ENCODE measurements at regions of chr1 and their contacts with region 1.

Region 1: GRCh38 chr1:89022167-89022959 is at the start of gene GBP3:
- DNase-seq: peak in 4 of 35 experiments; percentile 1 to 64 (median 10)
- ATAC-seq: peak; percentile 70 to 82 (median 77)
- H3K4me3 ChIP-seq: peak within 1 kb of the TSS; percentile 57 to 77
- H3K4me3 Mint-ChIP-seq: peak within 1 kb of the TSS; percentile 80 to 96 (median 92)
- H3K27ac ChIP-seq: peak within 1 kb of the TSS; percentile 88
- H3K27ac Mint-ChIP-seq: peak within 1 kb of the TSS; percentile 95 to 97
- H3K4me1 ChIP-seq: peaks cover 14 to 26% of the 10 kb centered on the region in 2 experiments
- H3K4me1 Mint-ChIP-seq: peaks cover 43 to 58% (median 54%) of the 10 kb centered on the region in 3 donors
- H3K27me3 ChIP-seq: no peaks in the 10 kb centered on the region
- H3K27me3 Mint-ChIP-seq: no peaks in the 10 kb centered on the region
- total RNA-seq, gene GBP3: 26.7 to 52.0 (median 39.2) TPM

Region 2: GRCh38 chr1:88847643-88848042 is 174.7 kb before region 1 on chr1:
- CTCF ChIA-PET with region 1: no interaction called
- POLR2A ChIA-PET with region 1: no interaction called
- DNase-seq: no peak
- ATAC-seq: no peak
- H3K4me3 ChIP-seq: no peak overlapping the region
- H3K4me3 Mint-ChIP-seq: no peak overlapping the region
- H3K27ac ChIP-seq: no peak overlapping the region
- H3K27ac Mint-ChIP-seq: no peak overlapping the region
- H3K4me1 ChIP-seq: no peaks in the 10 kb centered on the region
- H3K4me1 Mint-ChIP-seq: no peaks in the 10 kb centered on the region
- H3K27me3 ChIP-seq: no peaks in the 10 kb centered on the region
- H3K27me3 Mint-ChIP-seq: no peaks in the 10 kb centered on the region

Region 3: GRCh38 chr1:88998716-88999115 is 23.6 kb before region 1 on chr1:
- CTCF ChIA-PET with region 1: interaction called, 3 to 11 read pairs
- POLR2A ChIA-PET with region 1: interaction called in 1 of 2 experiments, 12 read pairs
- DNase-seq: peak in 3 of 35 experiments; percentile 26 to 86 (median 36)
- ATAC-seq: peak; percentile 75 to 87 (median 81)
- H3K4me3 ChIP-seq: no peak overlapping the region
- H3K4me3 Mint-ChIP-seq: no peak overlapping the region
- H3K27ac ChIP-seq: no peak overlapping the region
- H3K27ac Mint-ChIP-seq: no peak overlapping the region
- H3K4me1 ChIP-seq: peaks cover under 1 to 19% of the 10 kb centered on the region in 2 experiments
- H3K4me1 Mint-ChIP-seq: peaks cover 34 to 39% (median 38%) of the 10 kb centered on the region in 3 donors
- H3K27me3 ChIP-seq: no peaks in the 10 kb centered on the region
- H3K27me3 Mint-ChIP-seq: no peaks in the 10 kb centered on the region

Region 4: GRCh38 chr1:89005286-89006151 is 16.8 kb before region 1 on chr1:
- CTCF ChIA-PET with region 1: interaction called in 1 of 2 experiments, 3 read pairs
- POLR2A ChIA-PET with region 1: interaction called in 1 of 2 experiments, 14 read pairs
- DNase-seq: no peak
- ATAC-seq: no peak
- H3K4me3 ChIP-seq: no peak overlapping the region
- H3K4me3 Mint-ChIP-seq: no peak overlapping the region
- H3K27ac ChIP-seq: no peak overlapping the region
- H3K27ac Mint-ChIP-seq: peak overlapping the region in 1 of 2 donors; percentile 21
- H3K4me1 ChIP-seq: peaks cover 0 to 17% of the 10 kb centered on the region in 2 experiments
- H3K4me1 Mint-ChIP-seq: peaks cover 45 to 51% (median 45%) of the 10 kb centered on the region in 3 donors
- H3K27me3 ChIP-seq: no peaks in the 10 kb centered on the region
- H3K27me3 Mint-ChIP-seq: no peaks in the 10 kb centered on the region

Region 5: GRCh38 chr1:89041119-89041641 is 18.8 kb after region 1 on chr1:
- CTCF ChIA-PET with region 1: no interaction called
- POLR2A ChIA-PET with region 1: no interaction called
- DNase-seq: no peak
- ATAC-seq: peak in 2 of 4 experiments; percentile 51 to 55
- H3K4me3 ChIP-seq: no peak overlapping the region
- H3K4me3 Mint-ChIP-seq: no peak overlapping the region
- H3K27ac ChIP-seq: no peak overlapping the region
- H3K27ac Mint-ChIP-seq: peak overlapping the region; percentile 2 to 37
- H3K4me1 ChIP-seq: no peaks in the 10 kb centered on the region
- H3K4me1 Mint-ChIP-seq: peaks cover 26 to 37% (median 34%) of the 10 kb centered on the region in 3 donors
- H3K27me3 ChIP-seq: no peaks in the 10 kb centered on the region
- H3K27me3 Mint-ChIP-seq: no peaks in the 10 kb centered on the region

Region 6: GRCh38 chr1:89125913-89126580 is 103.7 kb after region 1 on chr1 and contains the start of gene GBP2:
- CTCF ChIA-PET with region 1: interaction called in 1 of 2 experiments, 7 read pairs
- POLR2A ChIA-PET with region 1: interaction called in 1 of 2 experiments, 10 read pairs
- DNase-seq: peak in 7 of 35 experiments; percentile 4 to 63 (median 24)
- ATAC-seq: peak; percentile 78 to 86 (median 83)
- H3K4me3 ChIP-seq: peak within 1 kb of the TSS; percentile 77 to 94
- H3K4me3 Mint-ChIP-seq: peak within 1 kb of the TSS; percentile 92 to 100 (median 94)
- H3K27ac ChIP-seq: peak within 1 kb of the TSS; percentile 74
- H3K27ac Mint-ChIP-seq: peak within 1 kb of the TSS; percentile 98 to 100
- H3K4me1 ChIP-seq: peaks cover 33 to 38% of the 10 kb centered on the region in 2 experiments
- H3K4me1 Mint-ChIP-seq: peaks cover 57 to 66% (median 65%) of the 10 kb centered on the region in 3 donors
- H3K27me3 ChIP-seq: no peaks in the 10 kb centered on the region
- H3K27me3 Mint-ChIP-seq: no peaks in the 10 kb centered on the region
- total RNA-seq, gene GBP2: 82.2 to 226 (median 186) TPM

Region 7: GRCh38 chr1:89274411-89274857 is 252.1 kb after region 1 on chr1:
- CTCF ChIA-PET with region 1: interaction called in 1 of 2 experiments, 4 read pairs
- POLR2A ChIA-PET with region 1: interaction called in 1 of 2 experiments, 10 read pairs
- DNase-seq: peak in 3 of 35 experiments; percentile 9 to 74 (median 30)
- ATAC-seq: peak in 3 of 4 experiments; percentile 23 to 56 (median 24)
- H3K4me3 ChIP-seq: peak overlapping the region in 1 of 2 donors; percentile 28
- H3K4me3 Mint-ChIP-seq: peak overlapping the region; percentile 71 to 82 (median 76)
- H3K27ac ChIP-seq: peak overlapping the region; percentile 87
- H3K27ac Mint-ChIP-seq: peak overlapping the region; percentile 92 to 99
- H3K4me1 ChIP-seq: peaks cover 37 to 51% of the 10 kb centered on the region in 2 experiments
- H3K4me1 Mint-ChIP-seq: peaks cover 62 to 90% (median 79%) of the 10 kb centered on the region in 3 donors
- H3K27me3 ChIP-seq: no peaks in the 10 kb centered on the region
- H3K27me3 Mint-ChIP-seq: no peaks in the 10 kb centered on the region

Region 8: GRCh38 chr1:89358287-89358893 is 336.0 kb after region 1 on chr1:
- CTCF ChIA-PET with region 1: interaction called, 3 to 11 read pairs
- POLR2A ChIA-PET with region 1: no interaction called
- DNase-seq: peak; percentile 58 to 88 (median 79)
- ATAC-seq: peak; percentile 91 to 97 (median 95)
- H3K4me3 ChIP-seq: no peak overlapping the region
- H3K4me3 Mint-ChIP-seq: peak overlapping the region in 2 of 3 donors; percentile 0 to 60
- H3K27ac ChIP-seq: no peak overlapping the region
- H3K27ac Mint-ChIP-seq: peak overlapping the region; percentile 65 to 84
- H3K4me1 ChIP-seq: peaks cover 0 to 5% of the 10 kb centered on the region in 2 experiments
- H3K4me1 Mint-ChIP-seq: peaks cover 36 to 47% (median 37%) of the 10 kb centered on the region in 3 donors
- H3K27me3 ChIP-seq: no peaks in the 10 kb centered on the region
- H3K27me3 Mint-ChIP-seq: no peaks in the 10 kb centered on the region

Region 9: GRCh38 chr1:89454845-89455521 is 432.6 kb after region 1 on chr1:
- CTCF ChIA-PET with region 1: interaction called in 1 of 2 experiments, 4 read pairs
- POLR2A ChIA-PET with region 1: interaction called in 1 of 2 experiments, 11 read pairs
- DNase-seq: peak; percentile 8 to 79 (median 49)
- ATAC-seq: peak; percentile 75 to 91 (median 79)
- H3K4me3 ChIP-seq: no peak overlapping the region
- H3K4me3 Mint-ChIP-seq: no peak overlapping the region
- H3K27ac ChIP-seq: no peak overlapping the region
- H3K27ac Mint-ChIP-seq: no peak overlapping the region
- H3K4me1 ChIP-seq: peaks cover 0 to 2% of the 10 kb centered on the region in 2 experiments
- H3K4me1 Mint-ChIP-seq: peaks cover 9 to 12% (median 11%) of the 10 kb centered on the region in 3 donors
- H3K27me3 ChIP-seq: no peaks in the 10 kb centered on the region
- H3K27me3 Mint-ChIP-seq: peaks cover 7 to 21% of the 10 kb centered on the region in 2 donors